Heart left ventricle (tissue), 16 donors: ENCODE measurements at regions of chr5 and their contacts with region 1.

Region 1: GRCh38 chr5:59351076-59351794 is 542.3 kb downstream of the PDE4D start:
- DNase-seq: peak in 2 of 5 donors; percentile 27 to 53
- ATAC-seq: peak; percentile 88 to 93 (median 90)
- H3K4me3 ChIP-seq: peak overlapping the region in 2 of 12 donors; percentile 10 to 11
- H3K27ac ChIP-seq: peak overlapping the region in 9 of 12 donors; percentile 2 to 74 (median 43)
- H3K4me1 ChIP-seq: peaks cover 0 to 29% (median 12%) of the 10 kb centered on the region in 12 donors
- H3K27me3 ChIP-seq: no peaks in the 10 kb centered on the region
- CTCF ChIP-seq: peak in 8 of 12 donors; percentile 25 to 63 (median 44)
- POLR2A ChIP-seq: no peak

Region 2: GRCh38 chr5:59296317-59297264 is 54.6 kb before region 1 on chr5:
- intact Hi-C with region 1: loop called in 1 of 10 experiments (anchors 10 kb)
- DNase-seq: no peak
- ATAC-seq: peak in 3 of 4 donors; percentile 36 to 59 (median 39)
- H3K4me3 ChIP-seq: peak overlapping the region in 11 of 12 donors; percentile 1 to 56 (median 41)
- H3K27ac ChIP-seq: peak overlapping the region in 11 of 12 donors; percentile 4 to 78 (median 58)
- H3K4me1 ChIP-seq: peaks cover 0 to 34% (median 15%) of the 10 kb centered on the region in 12 donors
- H3K27me3 ChIP-seq: no peaks in the 10 kb centered on the region
- CTCF ChIP-seq: no peak
- POLR2A ChIP-seq: no peak